Left cardiac atrium (tissue), 4 donors: ENCODE measurements at regions of chr6 and their contacts with region 1.

Region 1: DNA sequence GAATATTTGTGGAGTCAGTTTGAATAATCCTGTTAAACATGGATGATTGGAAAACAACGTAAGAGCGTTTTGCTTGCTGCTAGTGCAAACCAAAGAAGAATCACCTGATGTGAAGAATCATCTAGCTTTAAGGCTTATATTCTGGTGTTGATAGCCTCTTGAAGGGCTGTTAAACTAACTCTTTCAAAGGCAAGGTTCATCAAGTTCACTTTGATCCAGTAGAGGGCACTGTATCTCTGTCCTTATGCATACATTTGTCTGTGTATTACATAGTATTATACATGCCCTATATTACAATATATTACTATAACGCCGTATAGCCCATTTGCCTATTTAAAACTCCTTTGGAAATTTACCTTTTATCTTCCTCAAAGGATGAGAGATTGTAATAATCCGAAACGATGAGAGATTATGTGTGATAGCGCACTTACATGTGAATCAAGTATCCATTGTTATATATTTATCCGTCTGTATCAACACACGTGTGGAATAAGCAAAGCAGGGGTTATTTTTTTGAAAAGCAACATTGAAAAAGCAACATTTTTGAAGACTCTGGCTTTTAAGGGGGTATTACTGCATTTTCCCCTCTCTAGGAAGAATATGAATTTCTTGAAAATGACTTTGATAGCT is 50.8 kb upstream of the NRN1 start:
- DNase-seq: no peak
- ATAC-seq: peak in 1 of 2 donors; percentile 71

Region 2: DNA sequence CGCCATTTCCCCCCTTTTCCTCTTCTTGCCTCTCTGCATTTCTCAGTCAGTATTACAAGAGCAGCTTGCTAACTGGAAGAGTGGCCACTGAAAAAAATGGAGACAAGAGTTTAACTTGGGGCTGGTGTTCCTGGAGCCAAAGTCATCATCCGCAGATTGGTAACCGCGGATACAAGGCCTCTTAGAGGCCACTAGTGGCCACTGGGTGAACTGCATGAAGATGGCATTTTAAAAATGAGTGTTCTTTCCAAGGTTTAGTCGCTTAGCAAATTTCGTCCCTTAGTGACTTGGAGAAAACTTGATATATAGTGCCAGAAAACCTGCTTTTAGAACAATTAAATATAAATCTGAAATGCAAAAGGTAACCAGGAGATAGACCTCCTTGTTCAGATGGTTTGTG is 258.1 kb after region 1 on chr6:
- intact Hi-C with region 1: loop called in 1 of 2 experiments (anchors 5 kb)
- DNase-seq: peak; percentile 50
- ATAC-seq: peak in 1 of 2 donors; percentile 56

Region 3: GRCh38 chr6:6494677-6495076 is 437.1 kb after region 1 on chr6:
- intact Hi-C with region 1: loop called (anchors 2 to 5 kb)
- DNase-seq: peak; percentile 62
- ATAC-seq: peak; percentile 41 to 72

Region 4: DNA sequence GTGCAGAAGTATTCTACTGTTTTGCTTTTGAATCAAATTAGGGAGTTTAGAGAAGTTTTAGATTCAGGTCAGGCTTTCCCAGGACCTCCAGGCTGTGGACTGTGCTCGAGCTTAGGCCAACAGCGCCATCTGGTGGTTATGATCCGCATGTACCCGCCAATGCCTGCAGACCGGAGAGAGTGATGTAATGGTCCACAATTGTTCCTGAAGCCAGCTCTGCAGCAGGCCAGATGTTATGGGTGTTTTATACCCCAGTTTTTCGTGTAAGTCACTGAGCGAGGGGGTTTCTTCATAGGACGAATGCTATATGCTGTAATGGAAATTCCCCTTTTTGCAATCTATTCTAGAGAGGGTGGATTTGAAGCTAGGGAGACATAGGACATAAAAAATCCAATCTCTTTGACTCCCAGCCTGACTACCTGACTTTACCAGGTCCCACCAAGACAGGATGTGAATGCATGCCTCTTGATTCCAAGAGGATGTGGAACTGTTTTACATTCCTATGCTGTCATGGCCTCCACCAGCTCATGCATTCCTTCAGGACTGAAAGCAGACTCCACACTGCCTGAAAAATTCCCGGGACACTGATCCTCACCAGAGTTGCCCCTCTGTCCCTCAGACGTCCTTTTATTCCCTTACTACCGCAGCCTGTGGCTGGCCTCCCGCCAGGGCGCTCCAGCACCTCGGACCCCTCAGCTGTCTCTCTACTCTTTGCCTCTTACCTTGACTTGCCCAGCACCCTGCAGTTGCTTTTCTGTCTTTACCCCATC is 489.8 kb after region 1 on chr6:
- intact Hi-C with region 1: loop called (anchors 2 to 5 kb)
- DNase-seq: peak; percentile 86
- ATAC-seq: peak; percentile 96